ENCODE measurements at regions of chr11 and their contacts with region 1.

Region 1: DNA sequence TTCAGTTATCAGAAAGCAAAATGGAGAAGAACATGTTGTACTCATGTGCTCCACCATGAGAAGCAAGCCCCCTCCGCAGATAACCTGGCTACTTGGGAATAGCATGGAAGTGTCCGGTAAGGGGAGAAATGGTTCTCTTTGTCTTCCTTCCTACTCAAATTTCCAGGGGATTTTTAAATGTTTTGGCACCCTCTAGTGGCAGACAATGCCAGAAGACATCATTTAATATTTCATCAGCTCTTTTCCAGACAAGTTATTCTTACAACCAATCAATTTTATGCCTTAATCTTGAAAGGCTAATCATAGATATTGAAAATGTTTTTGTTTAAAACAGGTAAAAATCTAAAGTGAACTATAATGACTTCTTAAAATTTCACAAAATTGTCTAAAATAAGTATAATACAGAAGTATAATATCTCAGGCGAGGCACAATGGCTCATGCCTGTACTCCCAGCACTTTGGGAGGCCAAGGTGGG is 15.7 kb downstream of the CRTAM start:
- DNase-seq: peak in 9 of 10 donors; percentile 27 to 82 (median 56)
- ATAC-seq: no peak
- H3K4me3 Mint-ChIP-seq: peak overlapping the region in 1 of 10 donors; percentile 18
- H3K27ac Mint-ChIP-seq: peak overlapping the region in 9 of 10 donors; percentile 33 to 97 (median 91)
- H3K4me1 Mint-ChIP-seq: peaks cover 27 to 63% (median 60%) of the 10 kb centered on the region in 4 donors
- H3K27me3 Mint-ChIP-seq: no peaks in the 10 kb centered on the region

Region 2: GRCh38 chr11:122796128-122796717 is 57.8 kb before region 1 on chr11:
- POLR2A ChIA-PET with region 1: interaction called, 24 read pairs
- DNase-seq: peak; percentile 53 to 85 (median 71)
- ATAC-seq: peak; percentile 96 to 99
- H3K4me3 Mint-ChIP-seq: no peak overlapping the region
- H3K27ac Mint-ChIP-seq: peak overlapping the region in 5 of 10 donors; percentile 22 to 69 (median 40)
- H3K4me1 Mint-ChIP-seq: peaks cover 0 to 8% (median 7%) of the 10 kb centered on the region in 4 donors
- H3K27me3 Mint-ChIP-seq: no peaks in the 10 kb centered on the region

Region 3: DNA sequence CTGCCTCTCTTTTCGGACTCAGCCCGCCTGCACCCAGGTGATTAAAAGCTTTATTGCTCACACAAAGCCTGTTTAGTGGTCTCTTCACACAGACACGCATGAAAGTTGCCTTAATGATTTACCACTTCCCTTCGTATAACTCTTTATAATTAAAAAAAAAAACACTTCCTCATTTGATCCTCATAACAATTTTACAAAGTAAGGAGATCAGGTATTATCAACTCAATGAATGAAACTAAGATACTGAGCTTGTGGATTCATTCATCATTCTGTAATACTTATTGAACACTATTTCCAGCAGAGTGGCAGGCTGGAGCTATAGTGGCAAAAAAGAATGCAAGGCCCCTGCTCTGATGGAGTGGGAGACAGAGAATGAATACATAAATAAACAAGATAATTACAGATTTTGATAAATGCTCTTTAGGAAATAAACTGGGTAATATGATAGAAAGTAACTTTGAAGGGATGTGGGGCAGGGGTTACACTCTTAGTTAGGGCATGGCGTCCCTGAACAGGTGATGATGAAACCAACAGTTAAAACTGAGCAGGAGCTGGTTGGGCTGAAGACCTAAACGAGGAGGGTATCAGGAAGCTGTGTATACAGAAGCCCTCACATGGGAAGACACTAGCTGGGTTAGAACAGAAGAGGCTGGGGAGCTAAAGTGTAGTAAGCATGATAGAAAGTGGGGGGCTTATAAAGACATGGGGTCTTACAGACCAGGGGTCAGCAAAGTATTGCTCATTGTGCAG is 21.1 kb before region 1 on chr11:
- POLR2A ChIA-PET with region 1: interaction called, 226 read pairs
- DNase-seq: peak in 1 of 10 donors; percentile 28
- ATAC-seq: peak; percentile 60 to 71
- H3K4me3 Mint-ChIP-seq: peak overlapping the region in 9 of 10 donors; percentile 3 to 72 (median 36)
- H3K27ac Mint-ChIP-seq: peak overlapping the region; percentile 37 to 95 (median 82)
- H3K4me1 Mint-ChIP-seq: peaks cover 25 to 56% (median 40%) of the 10 kb centered on the region in 4 donors
- H3K27me3 Mint-ChIP-seq: no peaks in the 10 kb centered on the region

Region 4: GRCh38 chr11:122843281-122844141 is 10.5 kb before region 1 on chr11:
- POLR2A ChIA-PET with region 1: interaction called, 226 read pairs
- DNase-seq: peak in 8 of 10 donors; percentile 46 to 79 (median 70)
- ATAC-seq: peak; percentile 81 to 89
- H3K4me3 Mint-ChIP-seq: peak overlapping the region; percentile 73 to 86 (median 81)
- H3K27ac Mint-ChIP-seq: peak overlapping the region; percentile 92 to 99 (median 96)
- H3K4me1 Mint-ChIP-seq: peaks cover 44 to 81% (median 76%) of the 10 kb centered on the region in 4 donors
- H3K27me3 Mint-ChIP-seq: no peaks in the 10 kb centered on the region

Region 5: DNA sequence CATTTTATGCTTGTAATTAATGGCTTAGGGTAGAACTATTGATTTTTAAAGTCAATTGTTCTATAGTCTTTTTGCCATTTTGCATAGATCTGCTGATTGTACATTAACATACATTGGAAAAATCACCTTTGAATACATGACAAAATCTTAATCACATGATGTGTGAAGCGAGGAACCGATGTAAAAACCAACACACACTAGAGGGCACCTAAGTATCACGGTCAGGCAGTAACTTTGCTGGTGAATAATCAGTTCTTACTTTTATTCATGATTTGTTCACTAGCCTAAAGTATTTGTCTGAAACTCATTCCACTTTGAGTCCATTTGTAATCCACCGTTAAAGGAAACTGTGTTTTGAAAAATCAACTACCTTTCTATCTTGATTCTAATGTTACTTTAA is 56.8 kb after region 1 on chr11:
- POLR2A ChIA-PET with region 1: no interaction called
- DNase-seq: peak in 1 of 10 donors; percentile 1
- ATAC-seq: no peak
- H3K4me3 Mint-ChIP-seq: no peak overlapping the region
- H3K27ac Mint-ChIP-seq: peak overlapping the region in 1 of 10 donors; percentile 22
- H3K4me1 Mint-ChIP-seq: no peaks in the 10 kb centered on the region
- H3K27me3 Mint-ChIP-seq: no peaks in the 10 kb centered on the region